ENCODE measurements at regions of chr6 and their contacts with region 1.

Region 1: DNA sequence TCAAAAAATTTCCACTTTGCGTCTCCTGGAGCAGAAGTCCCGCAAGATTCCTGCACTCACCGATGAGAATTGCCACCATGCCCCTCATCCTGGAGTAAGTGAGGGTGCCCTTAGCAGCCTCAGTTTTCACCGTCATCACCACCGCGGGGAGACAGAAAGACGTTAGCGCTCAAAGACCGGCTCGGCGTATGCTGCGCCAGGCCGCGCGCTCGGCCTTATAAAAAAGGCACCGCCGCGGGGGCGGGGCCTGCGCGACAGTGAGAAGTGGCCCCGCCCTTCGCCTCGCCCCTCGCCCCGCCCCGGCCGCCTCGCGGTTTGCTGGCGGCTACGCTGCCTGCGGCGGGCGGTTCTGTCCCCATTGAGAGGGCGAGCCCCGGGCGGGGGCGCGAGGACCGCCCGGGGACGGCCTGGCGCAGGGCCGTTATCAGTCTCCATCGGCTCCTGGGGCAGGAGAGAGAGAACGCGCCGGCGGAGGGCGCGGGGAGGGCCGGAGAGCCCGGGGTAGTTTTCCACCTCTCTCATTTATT is 122.3 kb upstream of the SLC2A12 start:
- DNase-seq: peak; percentile 90 to 94
- H3K4me3 ChIP-seq: peak overlapping the region; percentile 56
- H3K4me3 Mint-ChIP-seq: peak overlapping the region; percentile 86
- H3K27ac Mint-ChIP-seq: peak overlapping the region; percentile 84
- H3K4me1 ChIP-seq: peaks cover 11% of the 10 kb centered on the region
- H3K4me1 Mint-ChIP-seq: no peaks in the 10 kb centered on the region
- H3K27me3 ChIP-seq: no peaks in the 10 kb centered on the region
- H3K27me3 Mint-ChIP-seq: no peaks in the 10 kb centered on the region
- CTCF ChIP-seq: no peak

Region 2: GRCh38 chr6:134199848-134200606 is 25.3 kb after region 1 on chr6:
- CTCF ChIA-PET with region 1: interaction called, 6 read pairs
- POLR2A ChIA-PET with region 1: interaction called, 3 read pairs
- intact Hi-C with region 1: loop called (anchors 1 kb)
- DNase-seq: peak; percentile 56 to 69
- H3K4me3 ChIP-seq: no peak overlapping the region
- H3K4me3 Mint-ChIP-seq: peak overlapping the region; percentile 37
- H3K27ac Mint-ChIP-seq: peak overlapping the region; percentile 58
- H3K4me1 ChIP-seq: peaks cover 56% of the 10 kb centered on the region
- H3K4me1 Mint-ChIP-seq: peaks cover 7% of the 10 kb centered on the region
- H3K27me3 ChIP-seq: no peaks in the 10 kb centered on the region
- H3K27me3 Mint-ChIP-seq: no peaks in the 10 kb centered on the region
- CTCF ChIP-seq: no peak

Region 3: DNA sequence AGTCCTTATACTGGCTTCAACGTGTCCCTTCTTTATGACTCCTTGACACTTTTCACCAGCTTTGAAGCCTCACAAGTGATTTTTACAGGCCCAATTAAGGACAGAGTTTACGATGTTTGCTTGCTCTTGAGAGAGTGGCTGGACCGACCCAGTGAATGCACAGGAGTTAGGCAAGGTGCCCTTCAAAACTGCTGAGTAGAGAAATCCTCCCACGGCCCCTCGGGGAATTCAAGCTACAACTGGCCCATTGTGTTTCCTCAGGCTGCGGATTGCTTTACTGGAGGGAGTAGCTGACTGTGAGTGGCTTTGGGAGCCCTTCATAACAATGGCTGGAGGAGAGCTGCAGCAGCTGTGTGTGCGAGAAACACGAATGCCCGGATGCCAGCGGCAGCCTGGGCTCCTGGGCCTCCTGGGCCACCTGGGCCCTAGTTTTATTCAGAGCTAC is 93.2 kb after region 1 on chr6:
- CTCF ChIA-PET with region 1: no interaction called
- POLR2A ChIA-PET with region 1: no interaction called
- intact Hi-C with region 1: loop called (anchors 1 kb)
- DNase-seq: peak; percentile 62 to 79
- H3K4me3 ChIP-seq: no peak overlapping the region
- H3K4me3 Mint-ChIP-seq: no peak overlapping the region
- H3K27ac Mint-ChIP-seq: peak overlapping the region; percentile 83
- H3K4me1 ChIP-seq: peaks cover 10% of the 10 kb centered on the region; the same call in 1 of the 2 replicates
- H3K4me1 Mint-ChIP-seq: peaks cover 6% of the 10 kb centered on the region
- H3K27me3 ChIP-seq: no peaks in the 10 kb centered on the region
- H3K27me3 Mint-ChIP-seq: no peaks in the 10 kb centered on the region
- CTCF ChIP-seq: no peak

Region 4: GRCh38 chr6:134402372-134402984 is 227.7 kb after region 1 on chr6:
- CTCF ChIA-PET with region 1: no interaction called
- POLR2A ChIA-PET with region 1: no interaction called
- intact Hi-C with region 1: loop called (anchors 5 kb)
- DNase-seq: no peak
- H3K4me3 ChIP-seq: no peak overlapping the region
- H3K4me3 Mint-ChIP-seq: no peak overlapping the region
- H3K27ac Mint-ChIP-seq: no peak overlapping the region
- H3K4me1 ChIP-seq: peaks cover 8% of the 10 kb centered on the region; the same call in 1 of the 2 replicates
- H3K4me1 Mint-ChIP-seq: peaks cover 11% of the 10 kb centered on the region
- H3K27me3 ChIP-seq: no peaks in the 10 kb centered on the region
- H3K27me3 Mint-ChIP-seq: no peaks in the 10 kb centered on the region
- CTCF ChIP-seq: no peak

Region 5: DNA sequence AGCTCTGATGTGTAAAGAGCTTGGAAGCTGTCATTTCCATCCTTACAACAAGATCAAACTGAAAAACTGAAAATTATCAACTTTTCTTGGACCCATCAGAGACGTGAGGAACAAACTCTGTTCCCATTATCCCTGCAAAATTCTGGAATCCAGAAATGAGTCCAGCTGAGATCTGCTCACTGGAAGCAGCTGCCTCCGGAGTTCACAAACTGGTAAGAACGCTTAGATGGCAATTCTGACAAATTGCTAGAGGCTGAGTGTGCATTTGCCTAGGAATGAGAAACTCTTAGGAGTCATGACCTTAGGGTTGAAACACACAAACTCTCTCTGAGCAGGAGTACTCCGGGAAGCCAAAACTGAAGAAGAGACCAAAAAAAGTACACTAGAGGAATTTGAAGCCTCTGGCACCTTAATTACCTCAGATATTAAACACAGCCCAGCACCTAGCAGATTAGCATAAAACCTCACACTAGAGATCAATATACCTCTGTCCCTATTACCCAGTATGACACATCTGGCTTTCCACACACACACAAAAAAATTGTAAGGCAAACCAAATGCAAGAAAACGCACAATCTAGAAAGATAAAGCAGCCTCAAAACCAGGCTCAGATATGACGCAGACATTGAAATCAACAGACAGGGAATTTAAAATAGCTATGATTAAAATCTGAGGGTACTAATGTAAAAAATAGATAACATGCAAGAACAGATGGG is 376.7 kb after region 1 on chr6:
- CTCF ChIA-PET with region 1: no interaction called
- POLR2A ChIA-PET with region 1: no interaction called
- intact Hi-C with region 1: loop called (anchors 10 kb)
- DNase-seq: no peak
- H3K4me3 ChIP-seq: no peak overlapping the region
- H3K4me3 Mint-ChIP-seq: no peak overlapping the region
- H3K27ac Mint-ChIP-seq: no peak overlapping the region
- H3K4me1 ChIP-seq: peaks cover 6% of the 10 kb centered on the region; the same call in 1 of the 2 replicates
- H3K4me1 Mint-ChIP-seq: peaks cover 9% of the 10 kb centered on the region
- H3K27me3 ChIP-seq: no peaks in the 10 kb centered on the region
- H3K27me3 Mint-ChIP-seq: no peaks in the 10 kb centered on the region
- CTCF ChIP-seq: no peak

Region 6: DNA sequence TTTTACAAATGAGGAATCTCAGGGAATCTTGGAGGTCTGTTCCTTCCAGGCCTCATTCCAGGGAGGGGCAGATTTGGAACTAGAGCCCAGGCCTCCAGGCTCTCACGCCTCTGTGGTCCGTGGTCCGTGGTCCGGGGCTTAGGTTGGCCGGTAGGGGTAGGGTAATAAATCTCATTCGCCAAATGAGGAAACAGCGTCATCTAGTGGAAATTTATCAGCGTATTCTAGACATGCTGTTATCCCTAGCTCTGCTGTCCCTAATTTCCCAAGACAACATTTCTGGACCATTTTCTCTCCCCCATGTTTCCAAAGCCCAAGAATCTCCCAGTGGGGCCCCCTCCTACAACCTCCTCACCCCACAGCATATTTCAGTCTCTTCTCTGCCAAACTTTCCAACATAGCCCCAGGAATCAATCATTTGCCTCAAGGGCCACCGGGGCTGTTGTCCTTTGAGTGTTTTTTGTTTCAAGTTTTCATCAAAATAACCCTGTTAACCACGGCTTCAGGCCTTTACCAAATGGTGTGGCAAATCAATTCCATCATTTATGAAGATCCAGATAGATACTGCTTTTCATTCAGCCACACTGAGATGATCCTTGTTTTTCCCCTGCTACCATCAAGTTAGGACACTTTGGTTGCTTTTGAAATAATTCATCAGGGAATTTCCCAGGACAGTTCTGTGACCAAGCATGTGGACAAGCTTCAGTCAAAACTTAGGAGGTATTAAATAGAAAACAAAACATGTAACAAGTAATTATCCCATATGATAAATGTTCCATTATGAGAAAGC is 648.4 kb after region 1 on chr6:
- CTCF ChIA-PET with region 1: interaction called, 9 read pairs
- POLR2A ChIA-PET with region 1: no interaction called
- intact Hi-C with region 1: loop called (anchors 1 kb)
- DNase-seq: peak; percentile 49 to 73
- H3K4me3 ChIP-seq: no peak overlapping the region
- H3K4me3 Mint-ChIP-seq: no peak overlapping the region
- H3K27ac Mint-ChIP-seq: no peak overlapping the region
- H3K4me1 ChIP-seq: 0 out of 2 replicates have a peak, but pooled peaks cover 6% of the 10 kb centered on the region
- H3K4me1 Mint-ChIP-seq: peaks cover 23% of the 10 kb centered on the region
- H3K27me3 ChIP-seq: no peaks in the 10 kb centered on the region
- H3K27me3 Mint-ChIP-seq: no peaks in the 10 kb centered on the region
- CTCF ChIP-seq: peak; percentile 84 to 87